ENCODE measurements at regions of chr11 and their contacts with region 1.

Region 1: GRCh38 chr11:17063171-17064002 is 14.1 kb downstream of the RPS13 start:
- DNase-seq: peak; percentile 68
- CTCF ChIP-seq: peak; percentile 73

Region 2: GRCh38 chr11:16935518-16936302 is 127.7 kb before region 1 on chr11:
- CTCF ChIA-PET with region 1: interaction called, 30 read pairs
- POLR2A ChIA-PET with region 1: no interaction called
- DNase-seq: peak; percentile 51
- CTCF ChIP-seq: peak; percentile 76

Region 3: DNA sequence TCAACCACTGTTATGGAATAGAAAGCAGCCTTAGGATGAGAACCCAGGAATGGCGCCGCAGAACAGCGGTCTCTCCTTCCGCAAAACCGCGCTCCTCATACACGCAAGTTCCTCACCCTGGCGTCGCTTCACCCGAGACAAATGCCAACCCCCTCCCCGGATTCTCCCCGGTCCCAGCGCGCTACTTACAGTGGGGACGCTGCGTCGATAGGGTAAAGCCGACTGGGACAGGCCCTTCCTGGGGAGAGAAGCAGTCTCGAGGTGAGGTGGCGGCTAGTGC is 13.8 kb after region 1 on chr11:
- CTCF ChIA-PET with region 1: interaction called, 13 read pairs
- POLR2A ChIA-PET with region 1: no interaction called
- DNase-seq: no peak
- CTCF ChIP-seq: no peak

Region 4: GRCh38 chr11:17314232-17314547 is 250.8 kb after region 1 on chr11:
- CTCF ChIA-PET with region 1: no interaction called
- POLR2A ChIA-PET with region 1: no interaction called
- DNase-seq: no peak
- CTCF ChIP-seq: no peak